ENCODE measurements at regions of chr19 and their contacts with region 1.

Region 1: DNA sequence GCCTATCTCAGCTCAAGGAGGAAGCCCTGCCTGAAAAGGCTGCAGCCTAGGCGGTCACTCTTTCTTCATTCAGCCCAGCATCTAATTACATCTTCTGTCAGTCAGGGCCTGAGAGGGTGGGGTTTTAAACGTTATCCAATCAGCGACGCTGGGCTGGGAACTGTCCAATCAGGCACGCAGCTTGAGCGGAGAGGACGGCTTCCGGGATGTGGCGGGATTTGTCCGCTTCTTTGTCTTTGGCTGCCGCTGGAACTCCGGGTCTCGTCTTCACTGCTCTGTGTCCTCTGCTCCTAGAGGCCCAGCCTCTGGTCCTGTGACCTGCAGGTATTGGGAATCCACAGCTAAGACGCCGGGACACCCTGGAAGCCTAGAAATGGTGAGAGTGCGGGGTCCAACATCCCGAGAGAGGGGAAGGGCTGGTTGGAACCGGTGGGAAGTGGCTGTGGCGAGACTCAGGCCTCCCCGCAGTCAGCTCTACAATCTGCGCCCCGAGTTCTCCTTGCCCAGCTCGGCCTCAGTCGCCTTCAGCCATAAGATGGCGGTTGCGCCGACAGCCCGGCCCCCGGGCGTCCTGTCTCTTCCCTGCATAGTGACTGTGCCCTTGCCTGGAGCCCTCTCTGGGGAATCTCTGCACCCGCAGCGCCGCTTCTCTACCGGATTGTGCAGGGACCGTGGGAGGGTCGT is at the start of gene ZNF738:
- DNase-seq: peak; percentile 93
- H3K4me3 Mint-ChIP-seq: peak within 1 kb of the TSS; percentile 99
- H3K27ac Mint-ChIP-seq: peak within 1 kb of the TSS; percentile 93
- H3K4me1 Mint-ChIP-seq: peaks cover 8% of the 10 kb centered on the region
- H3K27me3 Mint-ChIP-seq: no peaks in the 10 kb centered on the region
- total RNA-seq, gene ZNF738: 16.6 to 17.1 TPM

Region 2: DNA sequence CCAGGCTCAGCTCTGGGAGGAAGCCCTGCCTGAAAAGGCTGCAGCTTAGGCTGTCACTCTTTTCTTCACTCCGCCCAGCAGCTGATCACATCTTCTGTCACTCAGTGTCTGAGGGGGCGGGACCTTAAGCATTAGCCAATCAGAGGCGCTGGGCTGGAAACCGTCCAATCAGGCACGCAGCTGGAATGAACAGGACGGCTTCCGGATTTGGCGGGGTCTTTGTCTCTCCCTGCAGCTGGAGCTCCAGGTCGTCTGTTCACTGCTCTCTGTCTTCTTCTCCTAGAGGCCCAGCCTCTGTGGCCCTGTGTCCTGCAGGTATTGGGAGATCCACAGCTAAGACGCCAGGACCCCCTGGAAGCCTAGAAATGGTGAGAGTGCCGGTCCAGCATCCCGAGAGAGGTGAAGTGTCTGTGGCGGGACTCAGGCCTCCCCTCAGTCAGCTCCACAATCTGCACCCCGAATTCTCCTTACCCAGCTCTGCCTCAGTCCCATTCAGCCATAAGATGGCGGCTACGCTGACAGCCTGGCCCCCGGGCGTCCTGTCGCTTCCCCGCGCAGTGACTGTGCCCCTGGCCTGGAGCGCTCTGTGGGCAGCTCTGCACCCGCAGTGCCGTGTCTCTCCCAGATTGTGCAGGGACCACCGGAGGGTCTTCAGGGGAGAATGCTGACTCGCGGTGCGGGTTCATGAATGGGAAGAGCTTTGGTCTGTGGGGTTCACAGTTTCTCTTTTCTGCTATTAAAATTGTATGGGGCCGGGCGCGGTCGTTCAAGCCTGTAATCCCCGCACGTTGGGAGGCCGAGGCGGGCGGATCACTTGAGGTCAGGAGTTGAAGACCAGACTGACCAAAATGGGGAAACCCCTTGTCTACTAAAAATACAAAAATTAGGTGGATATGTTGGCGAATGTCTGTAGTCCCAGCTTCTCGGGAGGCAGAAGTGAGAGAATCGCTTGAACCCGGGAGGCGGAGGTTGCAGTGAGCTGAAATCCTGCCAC is 582.5 kb before region 1 on chr19 and contains the start of gene ZNF66:
- CTCF ChIA-PET with region 1: no interaction called
- intact Hi-C with region 1: loop called (anchors 1 kb)
- DNase-seq: peak; percentile 98
- H3K4me3 Mint-ChIP-seq: peak within 1 kb of the TSS; percentile 100
- H3K27ac Mint-ChIP-seq: peak within 1 kb of the TSS; percentile 95
- H3K4me1 Mint-ChIP-seq: peaks cover 18% of the 10 kb centered on the region
- H3K27me3 Mint-ChIP-seq: no peaks in the 10 kb centered on the region
- total RNA-seq, gene ZNF66: 3.9 to 4.9 TPM

Region 3: GRCh38 chr19:20999731-21000352 is 359.1 kb before region 1 on chr19:
- CTCF ChIA-PET with region 1: no interaction called
- intact Hi-C with region 1: loop called (anchors 10 kb)
- DNase-seq: peak; percentile 96
- H3K4me3 Mint-ChIP-seq: peak overlapping the region; percentile 97
- H3K27ac Mint-ChIP-seq: peak overlapping the region; percentile 87
- H3K4me1 Mint-ChIP-seq: peaks cover 3% of the 10 kb centered on the region
- H3K27me3 Mint-ChIP-seq: no peaks in the 10 kb centered on the region

Region 4: DNA sequence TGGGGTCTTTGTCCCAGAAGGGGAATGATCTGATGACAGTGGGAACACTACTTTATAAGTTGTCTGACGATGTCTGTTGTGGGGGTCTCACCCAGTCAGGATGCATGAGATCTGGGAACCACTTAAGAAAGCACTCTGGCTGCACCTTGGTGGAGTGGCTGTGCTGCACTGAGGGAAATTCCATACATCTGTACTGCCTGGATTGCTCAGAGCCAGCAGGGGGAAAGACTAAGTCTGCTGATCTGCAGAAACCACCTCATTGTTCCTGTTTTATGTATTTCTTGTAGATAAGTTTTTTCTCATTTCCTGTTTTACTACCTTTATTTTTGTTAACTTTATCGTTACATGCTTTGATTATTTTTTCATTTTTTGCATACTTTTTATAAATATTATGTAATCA is 311.2 kb before region 1 on chr19:
- CTCF ChIA-PET with region 1: no interaction called
- intact Hi-C with region 1: no loop called
- DNase-seq: no peak
- H3K4me3 Mint-ChIP-seq: no peak overlapping the region
- H3K27ac Mint-ChIP-seq: no peak overlapping the region
- H3K4me1 Mint-ChIP-seq: peaks cover 8% of the 10 kb centered on the region
- H3K27me3 Mint-ChIP-seq: no peaks in the 10 kb centered on the region

Region 5: GRCh38 chr19:21328885-21329605 is 29.9 kb before region 1 on chr19 and contains the start of gene ZNF708:
- CTCF ChIA-PET with region 1: no interaction called
- intact Hi-C with region 1: loop called (anchors 1 kb)
- DNase-seq: peak; percentile 90
- H3K4me3 Mint-ChIP-seq: peak within 1 kb of the TSS; percentile 98
- H3K27ac Mint-ChIP-seq: peak within 1 kb of the TSS; percentile 98
- H3K4me1 Mint-ChIP-seq: peaks cover 33% of the 10 kb centered on the region
- H3K27me3 Mint-ChIP-seq: no peaks in the 10 kb centered on the region
- total RNA-seq, gene ZNF708: 7.8 to 10.9 TPM

Region 6: GRCh38 chr19:21383980-21384582 is 25.2 kb after region 1 on chr19:
- CTCF ChIA-PET with region 1: no interaction called
- intact Hi-C with region 1: no loop called
- DNase-seq: no peak
- H3K4me3 Mint-ChIP-seq: no peak overlapping the region
- H3K27ac Mint-ChIP-seq: no peak overlapping the region
- H3K4me1 Mint-ChIP-seq: no peaks in the 10 kb centered on the region
- H3K27me3 Mint-ChIP-seq: no peaks in the 10 kb centered on the region

Measured in activated naive CD4-positive, alpha-beta T cell treated with anti-CD3 and anti-CD28 coated beads for 36 hours (primary cell).